Motor neuron (in vitro differentiated cells): ENCODE measurements at regions of chr4 and their contacts with region 1.

Region 1: GRCh38 chr4:142719854-142720541 is 126.1 kb downstream of the INPP4B start:
- ATAC-seq: no peak
- H3K4me3 ChIP-seq: no peak overlapping the region
- H3K27ac ChIP-seq: no peak overlapping the region
- H3K4me1 ChIP-seq: no peaks in the 10 kb centered on the region

Region 2: GRCh38 chr4:142282870-142283431 is 437.0 kb before region 1 on chr4:
- in situ Hi-C with region 1: loop called in 1 of 9 experiments (anchors 25 kb)
- ATAC-seq: peak in 1 of 8 experiments; percentile 44
- H3K4me3 ChIP-seq: no peak overlapping the region
- H3K27ac ChIP-seq: no peak overlapping the region
- H3K4me1 ChIP-seq: no peaks in the 10 kb centered on the region

Region 3: DNA sequence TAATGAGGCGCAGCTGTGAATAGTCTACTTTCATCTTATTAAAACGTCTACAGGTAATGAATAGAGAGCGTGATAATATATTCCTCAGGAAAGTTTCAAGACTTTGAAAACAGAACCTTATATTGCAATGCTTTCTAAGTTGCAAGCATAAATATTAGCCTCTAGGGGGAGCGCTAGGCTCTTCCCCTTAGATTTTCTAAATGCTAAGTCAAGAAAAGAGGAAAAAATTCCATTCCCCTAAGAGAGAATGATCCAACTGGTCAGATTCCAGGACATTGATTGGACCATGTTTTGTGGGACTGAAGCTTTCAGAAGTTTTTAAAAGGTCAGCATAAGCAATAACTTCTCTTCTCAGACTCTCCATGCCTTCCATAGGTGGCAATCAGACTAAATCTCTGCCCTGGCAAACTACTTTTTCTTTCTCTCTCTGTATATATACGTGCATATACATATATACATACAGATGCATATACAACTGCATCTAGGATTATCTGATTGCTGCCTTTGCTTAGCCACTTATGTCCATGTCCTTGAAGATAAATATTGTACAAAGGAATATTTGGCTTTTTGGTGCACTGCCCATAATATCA is 366.8 kb before region 1 on chr4:
- in situ Hi-C with region 1: loop called in 2 of 9 experiments (anchors 25 kb)
- ATAC-seq: peak; percentile 24 to 74 (median 44)
- H3K4me3 ChIP-seq: no peak overlapping the region
- H3K27ac ChIP-seq: no peak overlapping the region
- H3K4me1 ChIP-seq: peaks cover 30 to 32% of the 10 kb centered on the region in 2 donors